ENCODE measurements at regions of chr4 and their contacts with region 1.

Region 1: DNA sequence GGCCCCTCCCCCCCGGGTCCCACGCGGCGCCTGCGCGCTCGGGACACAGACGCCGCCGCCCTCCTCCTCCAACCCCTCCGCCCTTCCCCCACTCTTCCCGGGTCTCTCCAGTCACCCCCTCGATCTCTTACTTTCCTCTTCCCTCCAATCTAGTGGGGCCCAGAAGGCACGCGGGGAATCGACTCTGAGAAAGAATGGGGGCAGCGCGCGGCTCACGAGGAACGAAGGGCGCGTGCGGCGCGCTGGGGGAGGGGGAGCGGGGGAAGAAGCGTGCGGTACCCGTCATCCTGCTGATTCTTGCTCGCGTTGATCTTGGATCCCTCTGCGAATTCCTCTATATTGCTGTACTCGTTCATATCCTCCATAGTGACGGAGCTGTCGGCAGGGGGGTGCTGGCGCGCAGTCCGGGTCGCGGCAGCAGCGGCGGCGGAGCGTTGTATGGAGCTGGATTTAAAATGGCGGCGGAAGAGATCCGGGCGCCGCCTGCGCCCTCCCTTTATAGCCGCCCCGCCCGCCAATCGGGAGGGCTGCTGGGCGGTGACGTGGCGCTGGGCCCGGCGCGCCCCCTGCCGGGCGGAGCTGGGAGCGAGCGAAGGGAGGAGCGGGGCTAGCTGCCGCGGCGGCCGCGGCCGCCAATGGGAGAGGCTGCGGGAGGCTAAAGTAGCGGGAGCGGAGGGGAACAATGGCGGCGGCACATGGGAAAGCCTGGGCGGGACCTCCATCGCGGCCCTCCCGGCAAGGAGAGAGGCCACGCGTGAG is 1.1 kb downstream of the HNRNPDL start:
- DNase-seq: peak; percentile 95
- H3K4me3 Mint-ChIP-seq: peak overlapping the region; percentile 99
- H3K27ac Mint-ChIP-seq: peak overlapping the region; percentile 97
- H3K4me1 Mint-ChIP-seq: peaks cover 60% of the 10 kb centered on the region
- H3K27me3 Mint-ChIP-seq: no peaks in the 10 kb centered on the region

Region 2: DNA sequence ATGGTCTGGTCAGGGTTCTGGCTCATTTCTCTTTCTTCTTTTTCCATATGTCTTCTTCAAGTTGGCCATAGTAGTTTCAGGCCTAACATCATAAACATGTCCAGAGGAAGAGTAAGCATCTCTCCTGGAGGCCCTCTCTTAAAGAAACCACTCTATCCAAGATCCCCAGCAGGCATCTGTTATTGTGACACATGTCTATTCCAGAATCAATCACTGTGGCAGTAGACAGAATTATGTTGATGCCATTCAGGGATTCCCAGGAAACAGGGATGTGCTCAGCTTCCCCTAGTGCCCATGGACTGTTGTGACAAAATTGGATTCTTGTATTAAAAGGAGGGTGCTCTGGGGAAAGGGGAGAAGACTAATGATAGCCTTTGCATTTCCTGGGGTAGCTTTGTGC is 279.4 kb before region 1 on chr4:
- CTCF ChIA-PET with region 1: no interaction called
- POLR2A ChIA-PET with region 1: no interaction called
- intact Hi-C with region 1: no loop called
- DNase-seq: no peak
- H3K4me3 Mint-ChIP-seq: no peak overlapping the region
- H3K27ac Mint-ChIP-seq: no peak overlapping the region
- H3K4me1 Mint-ChIP-seq: peaks cover 14% of the 10 kb centered on the region
- H3K27me3 Mint-ChIP-seq: no peaks in the 10 kb centered on the region

Region 3: DNA sequence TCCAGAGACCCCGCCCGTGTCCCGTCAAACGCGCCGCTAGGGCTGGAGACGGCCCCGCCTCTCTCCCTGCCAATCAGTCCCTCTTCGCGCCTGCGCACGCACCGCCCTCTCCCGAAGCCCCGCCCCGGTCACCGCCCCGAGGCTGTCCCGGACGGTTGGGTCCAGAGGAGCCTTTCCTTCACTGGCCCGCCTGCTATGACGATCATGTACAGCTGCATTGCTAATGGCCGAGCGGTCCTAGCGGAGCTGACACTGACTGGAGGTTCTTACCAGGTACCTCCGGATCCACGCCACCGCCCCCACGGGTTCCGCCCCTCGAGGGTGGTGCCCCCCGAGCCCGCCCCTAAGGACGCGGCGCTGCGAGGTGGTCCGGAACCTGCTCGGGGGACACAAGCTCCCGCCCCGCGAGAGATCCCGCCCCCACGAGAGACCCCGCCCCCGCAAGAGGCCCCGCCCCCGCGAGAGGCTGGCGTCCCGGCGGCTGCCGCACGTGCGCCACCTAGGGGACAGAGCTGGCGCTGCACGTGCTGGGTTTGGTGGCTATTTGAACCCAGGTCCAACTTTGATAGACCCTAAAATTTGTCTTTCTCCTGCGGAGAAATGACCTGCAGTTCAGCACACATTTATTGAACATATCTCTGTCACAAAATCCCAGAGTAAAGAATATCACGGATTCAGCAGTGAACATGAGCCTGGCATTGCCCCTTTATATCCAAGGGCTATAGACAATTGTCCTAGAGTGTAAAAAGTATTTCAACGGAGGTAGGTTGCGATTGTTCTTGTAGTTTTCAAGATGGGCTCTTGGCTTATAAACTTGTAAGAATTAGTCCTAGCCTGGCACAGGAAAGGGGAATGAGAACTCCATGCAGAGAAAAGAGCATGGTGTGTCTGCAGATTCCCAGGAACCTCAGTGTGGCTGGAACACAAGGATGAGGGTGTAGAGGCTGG is 144.0 kb before region 1 on chr4:
- CTCF ChIA-PET with region 1: interaction called, 6 read pairs
- POLR2A ChIA-PET with region 1: interaction called, 3 read pairs
- intact Hi-C with region 1: loop called (anchors 1 kb)
- DNase-seq: peak; percentile 100
- H3K4me3 Mint-ChIP-seq: peak overlapping the region; percentile 61
- H3K27ac Mint-ChIP-seq: peak overlapping the region; percentile 38
- H3K4me1 Mint-ChIP-seq: peaks cover 12% of the 10 kb centered on the region
- H3K27me3 Mint-ChIP-seq: peaks cover 3% of the 10 kb centered on the region

Region 4: DNA sequence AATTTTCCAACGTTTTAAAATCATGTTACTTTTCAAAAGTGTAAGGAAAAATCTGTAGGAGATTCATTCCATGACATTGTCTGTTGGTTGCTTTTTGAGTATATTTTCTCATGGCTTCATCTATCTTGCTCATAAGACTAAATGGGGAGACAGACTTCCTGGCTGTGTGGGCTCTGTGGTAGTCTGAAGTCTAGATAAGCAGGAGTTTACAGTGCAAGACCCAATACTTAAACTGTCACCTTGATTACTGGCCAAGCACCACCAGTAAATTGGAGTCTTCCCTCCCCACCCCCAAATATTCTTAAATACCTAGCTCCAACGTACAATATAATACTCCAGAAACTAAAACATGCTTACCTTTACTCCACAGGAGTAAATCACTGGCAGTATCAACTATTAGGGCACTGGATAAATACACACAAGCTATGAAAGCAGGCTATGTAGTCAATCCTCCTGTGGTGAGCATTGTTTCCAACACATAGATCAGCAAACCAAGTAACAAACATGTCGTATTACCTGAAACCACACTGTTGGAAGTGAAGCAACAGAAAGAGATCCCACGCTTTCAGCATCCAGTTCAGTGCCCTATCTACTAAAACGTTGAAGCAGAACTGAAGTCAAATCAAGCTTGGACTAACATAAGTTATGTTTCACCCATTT is 61.6 kb before region 1 on chr4:
- CTCF ChIA-PET with region 1: interaction called, 25 read pairs
- POLR2A ChIA-PET with region 1: interaction called, 52 read pairs
- intact Hi-C with region 1: no loop called
- DNase-seq: no peak
- H3K4me3 Mint-ChIP-seq: no peak overlapping the region
- H3K27ac Mint-ChIP-seq: peak overlapping the region; percentile 56
- H3K4me1 Mint-ChIP-seq: peaks cover 77% of the 10 kb centered on the region
- H3K27me3 Mint-ChIP-seq: no peaks in the 10 kb centered on the region

Region 5: GRCh38 chr4:82394910-82395309 is 34.2 kb before region 1 on chr4:
- CTCF ChIA-PET with region 1: no interaction called
- POLR2A ChIA-PET with region 1: no interaction called
- intact Hi-C with region 1: no loop called
- DNase-seq: no peak
- H3K4me3 Mint-ChIP-seq: no peak overlapping the region
- H3K27ac Mint-ChIP-seq: no peak overlapping the region
- H3K4me1 Mint-ChIP-seq: no peaks in the 10 kb centered on the region
- H3K27me3 Mint-ChIP-seq: no peaks in the 10 kb centered on the region

Region 6: GRCh38 chr4:82753725-82754410 is 324.7 kb after region 1 on chr4:
- CTCF ChIA-PET with region 1: no interaction called
- POLR2A ChIA-PET with region 1: no interaction called
- intact Hi-C with region 1: no loop called
- DNase-seq: no peak
- H3K4me3 Mint-ChIP-seq: no peak overlapping the region
- H3K27ac Mint-ChIP-seq: no peak overlapping the region
- H3K4me1 Mint-ChIP-seq: no peaks in the 10 kb centered on the region
- H3K27me3 Mint-ChIP-seq: peaks cover 1% of the 10 kb centered on the region

Region 7: DNA sequence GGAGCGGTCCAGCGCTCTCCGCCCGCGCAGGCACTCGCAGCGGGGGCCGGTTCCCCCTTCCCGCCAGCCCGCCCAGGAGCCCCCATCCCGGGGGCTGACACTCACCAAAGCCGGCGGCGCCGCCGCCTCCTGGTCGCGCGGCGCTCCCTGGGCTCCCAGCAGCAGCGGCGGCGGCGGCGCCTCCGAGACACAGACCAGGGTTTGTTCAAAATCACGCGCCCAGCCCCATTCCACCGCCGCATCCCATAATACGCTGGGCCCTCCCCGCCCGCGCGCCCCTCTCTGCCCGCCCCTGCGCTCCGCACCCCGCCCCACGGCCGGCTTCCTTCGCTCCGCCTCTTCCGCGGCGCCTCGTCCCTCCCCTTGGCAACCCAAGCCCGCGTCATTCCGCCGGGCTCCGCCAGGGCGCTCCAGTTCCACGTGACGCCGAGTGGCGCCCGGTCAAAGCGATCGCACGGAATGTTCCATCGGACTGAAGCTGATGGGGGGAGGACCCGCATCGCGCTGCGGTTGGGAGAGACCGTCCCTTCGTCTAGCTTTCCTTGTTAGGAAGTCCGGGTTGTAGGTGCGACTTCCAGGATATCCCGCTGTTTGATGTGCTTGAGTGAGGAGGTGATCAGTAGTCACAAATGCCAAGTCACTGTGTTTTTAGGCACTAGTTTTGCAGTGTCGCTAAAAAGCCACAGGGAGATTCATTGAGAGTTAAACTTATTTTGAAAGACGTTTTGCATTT is 583.7 kb after region 1 on chr4:
- CTCF ChIA-PET with region 1: no interaction called
- POLR2A ChIA-PET with region 1: no interaction called
- intact Hi-C with region 1: loop called (anchors 2 kb)
- DNase-seq: peak; percentile 98
- H3K4me3 Mint-ChIP-seq: peak overlapping the region; percentile 92
- H3K27ac Mint-ChIP-seq: peak overlapping the region; percentile 92
- H3K4me1 Mint-ChIP-seq: peaks cover 36% of the 10 kb centered on the region
- H3K27me3 Mint-ChIP-seq: no peaks in the 10 kb centered on the region

Region 8: DNA sequence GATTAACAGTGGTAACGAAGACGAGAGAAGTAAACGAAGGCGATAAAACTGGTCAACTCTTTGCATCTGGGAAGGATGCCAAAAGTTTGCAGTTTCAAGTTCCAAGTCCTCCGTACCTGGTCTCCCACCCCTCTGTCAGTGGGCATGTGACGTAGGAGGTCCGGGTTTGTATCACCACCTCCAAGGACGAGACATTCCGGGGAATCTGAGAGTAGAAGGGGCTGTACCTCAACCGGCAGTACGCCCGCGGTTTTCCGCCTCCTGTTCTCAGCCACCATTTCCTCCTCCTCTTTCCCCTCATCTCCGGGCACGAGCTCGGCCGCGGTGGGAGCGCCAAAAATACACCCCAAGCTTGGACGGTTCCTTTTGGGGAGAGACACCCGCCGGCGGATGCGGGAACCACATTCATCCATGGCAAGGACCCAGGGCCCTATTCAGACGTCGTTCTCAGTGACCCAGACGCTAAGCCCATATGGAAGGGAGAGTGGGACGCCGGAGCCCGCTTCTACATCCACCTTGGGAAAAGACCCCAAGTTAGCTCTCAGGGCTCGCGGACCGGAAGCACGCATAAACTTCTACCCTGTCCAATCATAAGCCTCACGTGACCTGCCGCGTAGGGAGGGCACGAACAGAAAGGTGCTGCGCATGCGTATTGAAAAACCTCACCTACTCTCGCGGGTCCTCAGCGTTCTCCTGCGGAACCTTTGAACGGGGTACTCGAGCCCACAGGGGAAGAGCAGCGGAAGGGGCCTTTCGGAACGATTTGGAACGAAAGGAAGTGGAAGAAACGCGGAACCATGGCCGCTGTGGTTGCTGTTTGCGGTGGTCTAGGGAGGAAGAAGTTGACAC is 1026.4 kb after region 1 on chr4 and contains the starts of genes HELQ and MRPS18C:
- CTCF ChIA-PET with region 1: no interaction called
- POLR2A ChIA-PET with region 1: no interaction called
- intact Hi-C with region 1: loop called (anchors 5 kb)
- DNase-seq: peak; percentile 98
- H3K4me3 Mint-ChIP-seq: peak within 1 kb of the TSS; percentile 100
- H3K27ac Mint-ChIP-seq: peak within 1 kb of the TSS; percentile 100
- H3K4me1 Mint-ChIP-seq: peaks cover 44% of the 10 kb centered on the region
- H3K27me3 Mint-ChIP-seq: peaks cover 2% of the 10 kb centered on the region
- total RNA-seq, gene HELQ: 9.5 to 13.3 TPM
- total RNA-seq, gene MRPS18C: 63.3 to 72.8 TPM

Measured in activated CD4-positive, alpha-beta memory T cell treated with anti-CD3 and anti-CD28 coated beads for 36 hours (primary cell).